Activated B cell treated with CpG ODN at 0.5 μM for 24 hours (primary cell): ENCODE measurements at regions of chr3 and their contacts with region 1.

Region 1: DNA sequence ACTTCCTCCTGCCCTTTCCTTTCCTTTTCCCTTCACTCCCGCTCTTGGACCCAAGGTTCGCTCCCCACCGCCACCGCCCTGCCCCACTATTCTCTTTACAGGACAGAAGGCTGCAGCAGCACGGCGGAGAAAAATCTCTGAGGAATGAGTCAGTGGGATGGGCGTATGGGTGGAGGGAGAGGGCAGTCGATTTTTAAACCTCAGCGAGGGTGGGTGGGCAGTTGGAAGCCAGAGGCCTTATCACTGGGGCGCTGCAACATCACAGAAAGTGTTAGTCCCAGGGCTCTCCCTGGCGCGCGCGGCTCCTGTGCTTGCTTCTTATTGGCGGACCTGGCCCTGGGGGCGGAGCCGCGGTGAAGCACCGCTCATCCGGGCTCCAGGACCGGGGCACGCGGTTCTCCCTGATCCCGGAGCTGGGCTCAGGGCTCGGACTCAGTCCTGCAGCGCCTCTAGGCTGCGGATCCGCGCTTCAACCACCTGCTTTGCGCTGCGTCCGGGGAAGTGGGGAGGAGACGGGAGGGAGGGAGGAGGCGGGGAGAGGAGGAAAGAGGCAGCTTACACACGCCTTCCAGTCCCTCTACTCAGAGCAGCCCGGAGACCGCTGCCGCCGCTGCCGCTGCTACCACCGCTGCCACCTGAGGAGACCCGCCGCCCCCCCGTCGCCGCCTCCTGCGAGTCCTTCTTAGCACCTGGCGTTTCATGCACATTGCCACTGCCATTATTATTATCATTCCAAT is at the start of gene ALCAM:
- DNase-seq: peak; percentile 80
- ATAC-seq: peak; percentile 62
- H3K4me3 Mint-ChIP-seq: peak within 1 kb of the TSS; percentile 97
- H3K27ac Mint-ChIP-seq: peak within 1 kb of the TSS; percentile 99
- H3K4me1 Mint-ChIP-seq: peaks cover 33% of the 10 kb centered on the region
- H3K27me3 Mint-ChIP-seq: no peaks in the 10 kb centered on the region
- CTCF ChIP-seq: no peak
- total RNA-seq, gene ALCAM: 27.6 and 28.5 TPM in 2 replicates

Region 2: GRCh38 chr3:104521606-104522336 is 844.7 kb before region 1 on chr3:
- CTCF ChIA-PET with region 1: interaction called, 3 read pairs
- POLR2A ChIA-PET with region 1: interaction called, 13 read pairs
- intact Hi-C with region 1: loop called (anchors 2 kb)
- DNase-seq: peak; percentile 49
- ATAC-seq: peak; percentile 51
- H3K4me3 Mint-ChIP-seq: peak overlapping the region; percentile 75
- H3K27ac Mint-ChIP-seq: peak overlapping the region; percentile 98
- H3K4me1 Mint-ChIP-seq: peaks cover 73% of the 10 kb centered on the region
- H3K27me3 Mint-ChIP-seq: no peaks in the 10 kb centered on the region
- CTCF ChIP-seq: no peak

Region 3: DNA sequence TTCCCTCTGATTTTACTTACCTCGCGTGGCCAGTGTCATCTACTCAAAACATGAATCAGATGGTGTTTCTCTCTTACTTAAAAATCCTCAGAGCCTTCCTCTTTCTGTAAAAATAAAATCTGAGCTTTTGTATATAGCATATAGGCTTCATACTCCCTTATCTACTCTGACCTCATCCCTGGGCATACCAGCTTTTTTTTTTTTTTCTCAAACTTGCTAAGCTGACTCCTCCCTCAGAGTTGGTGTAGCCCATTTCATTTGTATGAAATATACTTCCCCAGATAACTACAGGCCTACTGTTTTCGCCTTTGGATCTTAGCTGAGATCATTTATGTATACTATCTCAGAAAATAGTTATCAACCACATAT is 648.7 kb before region 1 on chr3:
- CTCF ChIA-PET with region 1: no interaction called
- POLR2A ChIA-PET with region 1: interaction called, 14 read pairs
- intact Hi-C with region 1: loop called (anchors 2 kb)
- DNase-seq: no peak
- ATAC-seq: peak; percentile 70
- H3K4me3 Mint-ChIP-seq: peak overlapping the region; percentile 74
- H3K27ac Mint-ChIP-seq: peak overlapping the region; percentile 93
- H3K4me1 Mint-ChIP-seq: peaks cover 29% of the 10 kb centered on the region
- H3K27me3 Mint-ChIP-seq: no peaks in the 10 kb centered on the region
- CTCF ChIP-seq: no peak

Region 4: DNA sequence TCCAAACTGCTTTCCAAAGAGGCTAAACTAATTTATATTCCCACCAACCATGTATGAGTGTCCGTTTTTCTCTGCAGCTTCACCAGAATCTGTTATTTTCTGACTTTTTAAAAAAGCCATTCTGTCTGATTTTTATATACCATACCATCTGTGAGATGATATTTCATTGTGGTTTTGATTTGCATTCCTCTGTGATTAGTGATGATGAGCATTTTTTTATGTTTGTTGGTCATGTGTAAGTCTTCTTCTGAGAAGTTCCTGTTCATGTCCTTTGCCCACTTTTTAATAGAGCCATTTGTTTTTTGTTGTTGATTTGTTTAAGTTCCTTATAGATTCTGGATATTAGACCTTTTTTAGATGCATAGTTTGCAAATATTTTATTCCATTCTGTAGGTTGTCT is 179.2 kb before region 1 on chr3:
- CTCF ChIA-PET with region 1: no interaction called
- POLR2A ChIA-PET with region 1: no interaction called
- intact Hi-C with region 1: no loop called
- DNase-seq: no peak
- ATAC-seq: no peak
- H3K4me3 Mint-ChIP-seq: no peak overlapping the region
- H3K27ac Mint-ChIP-seq: no peak overlapping the region
- H3K4me1 Mint-ChIP-seq: no peaks in the 10 kb centered on the region
- H3K27me3 Mint-ChIP-seq: no peaks in the 10 kb centered on the region
- CTCF ChIP-seq: no peak

Region 5: DNA sequence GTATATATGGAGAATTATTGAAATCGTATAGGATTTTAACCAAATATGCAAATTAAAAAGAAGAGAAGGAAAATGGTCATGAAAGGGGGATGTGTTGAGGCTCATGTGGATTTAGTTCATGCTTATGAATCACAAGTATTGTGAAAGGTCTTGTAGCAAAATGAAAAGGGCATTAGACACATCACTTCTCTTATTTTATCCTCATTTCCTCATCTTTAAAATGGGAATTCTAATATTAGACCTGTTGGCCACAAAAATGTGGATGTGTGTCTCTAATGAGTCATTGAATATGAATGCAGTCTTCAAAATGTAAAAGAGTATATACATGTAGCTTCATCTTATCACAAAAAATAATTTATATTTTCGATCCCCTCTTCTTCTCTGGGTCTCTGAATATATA is 14.7 kb before region 1 on chr3:
- CTCF ChIA-PET with region 1: no interaction called
- POLR2A ChIA-PET with region 1: interaction called, 9 read pairs
- intact Hi-C with region 1: loop called (anchors 1 kb)
- DNase-seq: no peak
- ATAC-seq: no peak
- H3K4me3 Mint-ChIP-seq: no peak overlapping the region
- H3K27ac Mint-ChIP-seq: no peak overlapping the region
- H3K4me1 Mint-ChIP-seq: peaks cover 34% of the 10 kb centered on the region
- H3K27me3 Mint-ChIP-seq: peaks cover 22% of the 10 kb centered on the region
- CTCF ChIP-seq: no peak

Region 6: GRCh38 chr3:105722943-105723556 is 356.6 kb after region 1 on chr3:
- CTCF ChIA-PET with region 1: no interaction called
- POLR2A ChIA-PET with region 1: no interaction called
- intact Hi-C with region 1: loop called (anchors 5 kb)
- DNase-seq: no peak
- ATAC-seq: peak; percentile 93
- H3K4me3 Mint-ChIP-seq: peak overlapping the region; percentile 66
- H3K27ac Mint-ChIP-seq: peak overlapping the region; percentile 88
- H3K4me1 Mint-ChIP-seq: peaks cover 19% of the 10 kb centered on the region
- H3K27me3 Mint-ChIP-seq: no peaks in the 10 kb centered on the region
- CTCF ChIP-seq: no peak

Region 7: DNA sequence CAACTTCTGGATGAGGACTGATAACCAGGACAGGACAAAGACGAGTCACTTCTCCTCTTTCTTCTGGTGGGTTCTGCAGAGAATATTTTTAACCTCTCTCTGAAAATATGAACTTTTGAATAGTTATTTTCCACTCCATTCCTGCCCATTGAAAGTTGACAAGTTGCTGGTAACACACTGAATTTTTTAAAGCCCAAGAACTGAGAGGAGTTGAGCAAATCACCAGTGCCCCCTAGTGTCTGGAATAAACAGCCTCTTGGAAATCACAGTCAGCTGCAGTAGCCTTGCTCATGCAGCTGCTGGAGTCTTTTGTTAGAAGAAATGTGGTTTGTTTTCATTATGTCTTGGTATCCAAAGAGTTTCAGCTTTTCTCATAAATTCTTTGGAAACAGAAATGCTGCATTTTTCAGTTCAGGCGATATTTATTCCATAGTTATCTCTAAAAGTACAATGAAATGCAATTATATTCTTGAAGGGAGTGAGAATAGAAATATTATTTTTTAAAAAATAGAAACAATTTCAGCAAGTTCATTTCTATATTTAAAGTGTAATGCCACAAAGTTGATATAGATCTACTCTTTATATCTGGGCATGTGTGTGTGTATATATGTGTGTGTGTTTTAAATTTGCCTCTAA is 1243.3 kb after region 1 on chr3:
- CTCF ChIA-PET with region 1: no interaction called
- POLR2A ChIA-PET with region 1: no interaction called
- intact Hi-C with region 1: loop called (anchors 1 kb)
- DNase-seq: no peak
- ATAC-seq: peak; percentile 64
- H3K4me3 Mint-ChIP-seq: no peak overlapping the region
- H3K27ac Mint-ChIP-seq: no peak overlapping the region
- H3K4me1 Mint-ChIP-seq: no peaks in the 10 kb centered on the region
- H3K27me3 Mint-ChIP-seq: no peaks in the 10 kb centered on the region
- CTCF ChIP-seq: peak; percentile 87